H1 (cell line): ENCODE measurements at regions of chr7 and their contacts with region 1.

Region 1: DNA sequence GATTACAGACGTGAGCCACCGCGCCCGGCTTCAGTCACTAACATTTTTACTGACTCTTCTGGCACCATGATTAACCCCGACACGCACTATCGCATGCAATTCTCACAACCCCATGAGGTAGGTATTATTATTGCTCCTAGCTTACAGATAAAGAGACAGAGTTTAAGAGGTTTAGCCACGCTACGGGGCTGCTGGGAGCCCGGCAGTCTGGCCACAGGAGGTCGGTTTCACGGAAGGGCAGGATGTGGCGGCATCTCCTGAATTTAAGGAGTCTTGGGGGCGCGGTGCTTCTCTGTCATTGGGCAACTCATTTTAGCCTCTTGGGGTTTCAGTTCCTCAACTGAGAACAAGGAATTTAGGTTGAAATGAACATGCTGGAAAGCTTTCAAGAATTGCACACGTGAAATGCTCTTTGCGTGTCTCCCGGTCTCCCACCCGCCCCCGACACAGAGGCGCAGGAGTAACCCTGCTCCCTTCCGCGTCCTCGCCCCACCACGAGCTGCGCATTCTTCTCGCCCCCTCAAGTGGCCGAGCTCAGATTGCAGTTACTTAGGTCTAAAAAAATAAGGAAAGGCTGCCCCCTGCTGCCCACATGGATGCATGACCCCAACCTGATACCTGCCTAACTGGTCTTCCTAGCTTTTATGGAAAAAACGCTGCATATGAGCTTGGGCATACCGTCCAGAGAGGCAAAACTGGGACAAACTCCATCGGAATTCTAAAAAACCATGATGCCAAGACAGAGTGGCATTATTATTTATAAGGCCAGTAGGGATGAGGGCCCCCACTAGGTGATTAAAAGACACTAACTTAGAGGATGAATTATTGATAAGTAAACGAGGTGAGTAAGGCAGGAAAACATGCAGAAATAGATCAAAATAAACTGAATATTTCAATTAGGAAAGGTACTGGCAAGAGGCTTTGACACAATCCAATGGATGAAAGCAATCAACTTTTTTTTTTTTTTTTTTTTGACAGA is 12.4 kb downstream of the PRSS2 start:
- DNase-seq: peak; percentile 88 to 89
- H3K4me3 ChIP-seq: peak overlapping the region in 2 of 4 experiments; percentile 19 to 50; a peak in 5 of 8 replicates
- H3K27ac ChIP-seq: no peak overlapping the region
- H3K4me1 ChIP-seq: no peaks in the 10 kb centered on the region; a peak in 1 of 7 replicates
- H3K27me3 ChIP-seq: no peaks in the 10 kb centered on the region
- CTCF ChIP-seq: peak; percentile 81 to 100 (median 97)
- EP300 ChIP-seq: no peak; a peak in 1 of 3 replicates
- POLR2A ChIP-seq: no peak
- RAD21 ChIP-seq: peak; percentile 99 to 100

Region 2: GRCh38 chr7:142587578-142588191 is 195.5 kb before region 1 on chr7:
- CTCF ChIA-PET with region 1: interaction called, 10 read pairs
- POLR2A ChIA-PET with region 1: no interaction called
- DNase-seq: no peak
- H3K4me3 ChIP-seq: no peak overlapping the region
- H3K27ac ChIP-seq: no peak overlapping the region
- H3K4me1 ChIP-seq: peaks cover 0 to 5% (median 3%) of the 10 kb centered on the region in 4 experiments; a peak in 3 of 7 replicates
- H3K27me3 ChIP-seq: no peaks in the 10 kb centered on the region
- CTCF ChIP-seq: peak in 2 of 3 experiments; percentile 84 to 99; a peak in 3 of 4 replicates
- EP300 ChIP-seq: no peak
- POLR2A ChIP-seq: no peak
- RAD21 ChIP-seq: peak; percentile 26 to 40; a peak in 3 of 4 replicates

Region 3: GRCh38 chr7:142632291-142633134 is 150.7 kb before region 1 on chr7:
- CTCF ChIA-PET with region 1: interaction called, 381 read pairs
- POLR2A ChIA-PET with region 1: interaction called, 4 read pairs
- DNase-seq: peak; percentile 43 to 81
- H3K4me3 ChIP-seq: no peak overlapping the region
- H3K27ac ChIP-seq: no peak overlapping the region
- H3K4me1 ChIP-seq: no peaks in the 10 kb centered on the region
- H3K27me3 ChIP-seq: no peaks in the 10 kb centered on the region
- CTCF ChIP-seq: peak; percentile 59 to 90 (median 72)
- EP300 ChIP-seq: no peak
- POLR2A ChIP-seq: no peak
- RAD21 ChIP-seq: peak; percentile 87 to 92

Region 4: DNA sequence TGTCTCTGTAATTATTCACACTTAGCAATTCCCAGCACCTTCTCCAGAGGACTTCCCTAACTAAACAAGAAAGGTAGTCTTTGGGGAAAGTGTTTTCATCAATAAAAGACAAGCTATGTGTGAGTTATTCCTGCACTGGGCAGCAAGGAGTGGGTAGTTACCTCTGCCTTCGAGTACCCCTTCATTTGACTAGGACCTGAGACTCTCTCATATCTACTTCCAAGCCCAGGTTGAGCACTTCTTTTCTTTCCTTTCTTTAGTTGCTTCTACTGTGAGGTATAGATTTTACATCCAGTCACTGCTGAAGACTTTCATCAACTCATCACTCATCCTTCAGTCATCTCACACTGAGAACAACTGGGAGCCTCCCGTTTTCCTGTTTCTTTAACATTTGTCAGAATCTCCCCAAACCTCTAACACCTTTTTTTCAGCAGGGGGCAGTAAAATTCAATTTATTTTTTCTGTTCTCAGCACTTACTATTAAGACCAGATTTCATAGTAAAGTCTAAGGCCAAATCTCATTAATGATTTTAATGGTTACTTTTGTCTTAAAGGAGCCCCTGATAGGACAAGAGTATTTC is 114.0 kb before region 1 on chr7:
- CTCF ChIA-PET with region 1: interaction called, 179 read pairs
- POLR2A ChIA-PET with region 1: no interaction called
- DNase-seq: no peak
- H3K4me3 ChIP-seq: no peak overlapping the region
- H3K27ac ChIP-seq: no peak overlapping the region
- H3K4me1 ChIP-seq: no peaks in the 10 kb centered on the region
- H3K27me3 ChIP-seq: no peaks in the 10 kb centered on the region
- CTCF ChIP-seq: peak in 2 of 3 experiments; percentile 38 to 48; a peak in 2 of 4 replicates
- EP300 ChIP-seq: no peak
- POLR2A ChIP-seq: no peak
- RAD21 ChIP-seq: peak; percentile 64 to 65

Region 5: GRCh38 chr7:142711746-142712619 is 71.2 kb before region 1 on chr7:
- CTCF ChIA-PET with region 1: interaction called, 84 read pairs
- POLR2A ChIA-PET with region 1: no interaction called
- DNase-seq: no peak
- H3K4me3 ChIP-seq: no peak overlapping the region
- H3K27ac ChIP-seq: no peak overlapping the region
- H3K4me1 ChIP-seq: peaks cover 0 to 9% (median 6%) of the 10 kb centered on the region in 4 experiments; a peak in 4 of 7 replicates
- H3K27me3 ChIP-seq: no peaks in the 10 kb centered on the region
- CTCF ChIP-seq: peak in 2 of 3 experiments; percentile 46 to 54; a peak in 3 of 4 replicates
- EP300 ChIP-seq: no peak
- POLR2A ChIP-seq: no peak
- RAD21 ChIP-seq: peak; percentile 28 to 52; a peak in 3 of 4 replicates

Region 6: GRCh38 chr7:142796608-142797385 is 13.6 kb after region 1 on chr7:
- CTCF ChIA-PET with region 1: interaction called, 104 read pairs
- POLR2A ChIA-PET with region 1: no interaction called
- DNase-seq: peak in 1 of 2 experiments; percentile 64
- H3K4me3 ChIP-seq: peak overlapping the region; percentile 51 to 80 (median 69)
- H3K27ac ChIP-seq: no peak overlapping the region
- H3K4me1 ChIP-seq: peaks cover 14 to 30% (median 17%) of the 10 kb centered on the region in 4 experiments
- H3K27me3 ChIP-seq: peaks cover 1 to 36% (median 26%) of the 10 kb centered on the region in 4 experiments; a peak in 6 of 7 replicates
- CTCF ChIP-seq: no peak
- EP300 ChIP-seq: no peak
- POLR2A ChIP-seq: peak; percentile 21 to 43; a peak in 1 of 3 replicates
- RAD21 ChIP-seq: no peak